CD8-positive, alpha-beta T cell (primary cell): ENCODE measurements at regions of chr3 and their contacts with region 1.

Region 1: DNA sequence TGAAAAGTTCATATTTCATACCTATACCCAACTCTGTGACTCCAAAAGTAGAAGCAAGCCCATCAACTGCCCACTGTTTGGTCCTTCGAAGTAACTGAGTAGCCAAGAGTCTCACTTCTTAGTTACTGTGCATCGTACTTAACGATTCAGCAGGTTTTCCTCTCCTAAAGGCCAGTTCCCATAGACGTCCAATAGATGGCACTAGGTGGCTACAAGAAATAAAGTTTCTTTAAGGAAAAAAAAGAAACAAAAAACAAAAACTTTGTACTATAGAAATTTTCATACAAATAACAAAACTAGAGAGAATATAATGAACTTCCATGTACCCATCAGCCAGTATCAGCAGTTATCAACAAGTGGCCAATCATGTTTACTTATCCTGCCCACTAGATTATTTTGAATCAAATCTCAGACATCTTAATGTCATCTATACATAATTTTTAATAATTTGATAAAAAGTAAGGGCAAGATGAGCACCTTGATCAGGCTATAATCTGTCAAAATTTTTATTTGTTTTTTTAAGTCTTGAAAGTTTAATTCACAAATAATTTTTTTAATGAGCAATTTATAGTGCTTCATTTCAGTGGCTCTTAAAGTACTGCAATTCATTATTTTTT is 63.8 kb upstream of the ACP3 start:
- DNase-seq: peak in 2 of 9 experiments; percentile 17 to 43
- ATAC-seq: no peak
- H3K4me3 ChIP-seq: no peak overlapping the region
- H3K4me3 Mint-ChIP-seq: no peak overlapping the region
- H3K27ac ChIP-seq: no peak overlapping the region
- H3K27ac Mint-ChIP-seq: no peak overlapping the region
- H3K4me1 ChIP-seq: no peaks in the 10 kb centered on the region
- H3K4me1 Mint-ChIP-seq: no peaks in the 10 kb centered on the region
- H3K27me3 ChIP-seq: no peaks in the 10 kb centered on the region
- H3K27me3 Mint-ChIP-seq: peaks cover 13% of the 10 kb centered on the region
- CTCF ChIP-seq: peak; percentile 37

Region 2: DNA sequence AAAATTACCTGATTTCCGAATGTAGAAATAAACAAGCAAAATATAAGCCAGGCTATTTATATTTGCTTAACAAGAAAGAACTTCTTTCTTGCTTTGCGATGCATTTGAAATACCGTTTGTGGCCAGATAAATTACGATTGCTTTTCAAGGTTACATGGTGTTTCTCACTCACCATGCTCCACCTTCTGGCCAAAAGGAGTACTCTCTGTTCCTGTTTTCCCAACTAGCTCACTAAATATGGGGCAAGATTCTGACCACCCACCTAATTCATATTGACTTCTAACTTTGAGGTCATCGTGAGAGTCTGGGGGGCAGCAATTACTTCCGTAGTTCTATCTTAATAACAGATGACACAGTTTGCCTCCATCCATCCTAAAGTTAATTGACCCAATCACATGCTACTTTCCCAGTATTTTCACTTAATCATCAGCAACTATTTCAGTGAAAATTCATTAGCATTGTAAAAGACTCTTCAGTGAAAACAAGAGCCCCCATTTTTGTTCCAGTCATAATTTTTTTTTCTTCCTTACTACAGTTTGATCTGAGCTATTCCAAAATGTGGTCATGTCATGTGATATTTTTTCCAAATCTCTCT is 89.7 kb after region 1 on chr3:
- CTCF ChIA-PET with region 1: no interaction called
- POLR2A ChIA-PET with region 1: no interaction called
- intact Hi-C with region 1: loop called (anchors 1 to 5 kb)
- DNase-seq: peak in 3 of 9 experiments; percentile 13 to 56 (median 47)
- ATAC-seq: no peak
- H3K4me3 ChIP-seq: no peak overlapping the region
- H3K4me3 Mint-ChIP-seq: no peak overlapping the region
- H3K27ac ChIP-seq: no peak overlapping the region
- H3K27ac Mint-ChIP-seq: no peak overlapping the region
- H3K4me1 ChIP-seq: no peaks in the 10 kb centered on the region
- H3K4me1 Mint-ChIP-seq: no peaks in the 10 kb centered on the region
- H3K27me3 ChIP-seq: peaks cover 0 to 3% of the 10 kb centered on the region in 2 experiments
- H3K27me3 Mint-ChIP-seq: peaks cover 7% of the 10 kb centered on the region
- CTCF ChIP-seq: peak; percentile 62

Region 3: GRCh38 chr3:132399054-132399929 is 145.9 kb after region 1 on chr3:
- CTCF ChIA-PET with region 1: no interaction called
- POLR2A ChIA-PET with region 1: no interaction called
- intact Hi-C with region 1: loop called in 1 of 2 experiments (anchors 5 kb)
- DNase-seq: peak in 3 of 9 experiments; percentile 4 to 50 (median 44)
- ATAC-seq: peak; percentile 46
- H3K4me3 ChIP-seq: no peak overlapping the region
- H3K4me3 Mint-ChIP-seq: no peak overlapping the region
- H3K27ac ChIP-seq: no peak overlapping the region
- H3K27ac Mint-ChIP-seq: no peak overlapping the region
- H3K4me1 ChIP-seq: no peaks in the 10 kb centered on the region
- H3K4me1 Mint-ChIP-seq: no peaks in the 10 kb centered on the region
- H3K27me3 ChIP-seq: no peaks in the 10 kb centered on the region
- H3K27me3 Mint-ChIP-seq: no peaks in the 10 kb centered on the region
- CTCF ChIP-seq: peak; percentile 46

Region 4: GRCh38 chr3:132641837-132642538 is 388.6 kb after region 1 on chr3:
- CTCF ChIA-PET with region 1: no interaction called
- POLR2A ChIA-PET with region 1: no interaction called
- intact Hi-C with region 1: loop called in 1 of 2 experiments (anchors 5 kb)
- DNase-seq: peak in 2 of 9 experiments; percentile 39 to 55
- ATAC-seq: peak; percentile 54
- H3K4me3 ChIP-seq: no peak overlapping the region
- H3K4me3 Mint-ChIP-seq: no peak overlapping the region
- H3K27ac ChIP-seq: no peak overlapping the region
- H3K27ac Mint-ChIP-seq: no peak overlapping the region
- H3K4me1 ChIP-seq: no peaks in the 10 kb centered on the region
- H3K4me1 Mint-ChIP-seq: peaks cover 5% of the 10 kb centered on the region
- H3K27me3 ChIP-seq: no peaks in the 10 kb centered on the region
- H3K27me3 Mint-ChIP-seq: no peaks in the 10 kb centered on the region
- CTCF ChIP-seq: peak; percentile 85